ENCODE measurements at regions of chr17 and their contacts with region 1.

Region 1: DNA sequence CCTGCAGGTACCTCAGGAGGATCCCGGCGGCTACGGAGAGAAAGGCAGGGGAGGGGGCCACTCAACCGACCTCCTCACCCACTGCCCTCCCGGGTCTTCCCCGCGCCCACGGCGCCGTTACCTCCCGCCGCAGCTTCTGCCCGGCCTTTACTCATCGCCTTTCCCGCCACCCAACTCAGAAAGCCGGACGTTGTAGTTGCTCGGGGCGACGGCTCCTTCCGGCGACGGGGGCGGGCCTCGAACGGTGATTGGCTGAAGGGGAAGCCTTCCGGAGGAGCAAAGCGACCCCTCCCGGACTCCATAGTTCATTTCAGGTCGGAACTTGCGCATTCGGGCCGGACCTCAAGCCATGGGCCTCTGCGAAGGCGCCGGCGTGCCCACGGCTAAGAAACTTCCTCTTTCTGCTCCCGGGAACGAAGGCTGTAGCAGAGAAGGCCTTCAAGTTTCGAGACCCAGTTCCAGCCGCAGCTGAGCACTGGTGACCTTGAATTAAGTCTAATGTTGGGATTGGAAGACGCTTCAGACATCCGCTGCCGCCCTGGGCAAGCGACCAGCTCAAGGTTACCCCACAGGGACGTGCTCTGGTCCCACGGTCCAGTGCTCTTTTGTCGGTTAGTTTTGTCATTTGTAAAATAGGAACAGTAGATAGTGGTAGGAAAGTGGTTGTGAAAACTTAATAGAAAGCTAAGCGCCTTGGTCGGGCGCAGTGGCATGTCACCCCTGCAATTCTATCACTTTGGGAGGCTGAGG is at the start of gene PSMC3IP:
- DNase-seq: peak; percentile 98
- H3K4me3 Mint-ChIP-seq: peak within 1 kb of the TSS; percentile 98
- H3K27ac Mint-ChIP-seq: peak within 1 kb of the TSS; percentile 96
- H3K4me1 Mint-ChIP-seq: peaks cover 44% of the 10 kb centered on the region
- H3K27me3 Mint-ChIP-seq: no peaks in the 10 kb centered on the region
- total RNA-seq, gene PSMC3IP: 38.6 to 42.2 TPM

Region 2: GRCh38 chr17:42566883-42567573 is 10.7 kb before region 1 on chr17 and contains the start of gene MLX:
- CTCF ChIA-PET with region 1: interaction called, 13 read pairs
- intact Hi-C with region 1: loop called (anchors 1 kb)
- DNase-seq: peak; percentile 90
- H3K4me3 Mint-ChIP-seq: peak within 1 kb of the TSS; percentile 93
- H3K27ac Mint-ChIP-seq: peak within 1 kb of the TSS; percentile 93
- H3K4me1 Mint-ChIP-seq: peaks cover 55% of the 10 kb centered on the region
- H3K27me3 Mint-ChIP-seq: no peaks in the 10 kb centered on the region
- total RNA-seq, gene MLX: 22.1 to 24.7 TPM

Region 3: DNA sequence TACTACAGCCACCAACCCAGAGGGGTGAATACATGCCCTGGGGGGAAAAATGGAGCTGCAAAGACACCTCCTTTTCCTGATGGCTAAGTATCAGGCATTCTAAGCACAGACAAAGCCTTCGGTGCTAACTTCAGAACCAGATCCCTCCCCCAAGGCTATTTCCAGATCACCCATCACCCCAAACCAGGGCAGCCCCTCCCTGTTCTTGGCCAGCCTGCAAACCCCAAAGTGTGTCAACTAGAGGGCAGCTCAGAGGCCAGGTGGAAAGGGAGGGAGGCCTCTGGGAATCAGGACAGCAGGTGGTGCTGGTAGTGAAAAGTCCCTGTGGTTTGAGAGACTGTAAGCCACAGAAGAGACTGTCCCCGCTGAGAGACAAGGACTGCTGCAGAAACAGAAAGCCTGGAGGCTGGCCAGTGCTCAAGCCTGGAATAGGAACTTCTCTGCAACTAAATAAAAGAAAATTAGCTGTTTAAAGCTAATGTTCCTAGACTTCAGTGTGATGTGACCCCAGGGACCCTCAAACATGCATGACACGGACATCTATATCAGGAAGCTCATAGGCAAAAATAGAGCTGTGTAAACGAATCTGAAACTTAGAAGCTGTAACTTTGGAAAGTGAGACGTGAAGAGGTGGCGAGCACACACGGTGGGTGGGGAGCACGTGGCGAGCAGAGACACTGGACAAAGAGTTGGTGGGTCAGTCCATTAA is 40.9 kb after region 1 on chr17:
- CTCF ChIA-PET with region 1: interaction called, 10 read pairs
- intact Hi-C with region 1: no loop called
- DNase-seq: peak; percentile 13
- H3K4me3 Mint-ChIP-seq: no peak overlapping the region
- H3K27ac Mint-ChIP-seq: no peak overlapping the region
- H3K4me1 Mint-ChIP-seq: peaks cover 4% of the 10 kb centered on the region
- H3K27me3 Mint-ChIP-seq: no peaks in the 10 kb centered on the region

Region 4: DNA sequence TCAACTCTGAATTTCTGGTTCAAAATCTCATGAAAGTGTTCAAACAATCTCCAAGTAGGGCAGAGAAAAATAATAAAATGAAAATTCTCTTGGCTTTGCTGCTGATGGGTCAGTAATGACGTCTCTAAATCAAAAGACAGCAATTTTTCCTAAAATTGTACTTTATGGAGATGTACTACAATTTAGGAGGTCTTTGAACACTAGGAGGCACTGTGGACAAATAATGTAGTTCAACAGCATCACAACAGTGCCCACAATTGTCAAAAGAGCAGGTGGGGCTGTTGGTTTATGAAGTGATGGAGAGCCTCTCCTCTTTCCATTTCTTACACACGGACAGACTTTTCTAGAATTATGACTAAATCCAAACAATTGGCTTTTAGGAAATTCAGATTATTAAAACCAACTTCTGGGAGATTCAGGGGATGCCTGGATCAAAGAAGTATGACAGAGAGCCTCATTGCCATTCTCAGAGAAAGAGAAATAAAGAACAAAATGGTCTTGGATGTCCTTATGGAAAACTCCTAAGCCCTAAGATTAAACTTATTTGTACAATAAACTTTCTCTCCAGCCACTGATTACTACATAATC is 143.4 kb after region 1 on chr17:
- CTCF ChIA-PET with region 1: interaction called, 7 read pairs
- intact Hi-C with region 1: loop called (anchors 2 kb)
- DNase-seq: peak; percentile 35
- H3K4me3 Mint-ChIP-seq: no peak overlapping the region
- H3K27ac Mint-ChIP-seq: no peak overlapping the region
- H3K4me1 Mint-ChIP-seq: no peaks in the 10 kb centered on the region
- H3K27me3 Mint-ChIP-seq: no peaks in the 10 kb centered on the region

Region 5: DNA sequence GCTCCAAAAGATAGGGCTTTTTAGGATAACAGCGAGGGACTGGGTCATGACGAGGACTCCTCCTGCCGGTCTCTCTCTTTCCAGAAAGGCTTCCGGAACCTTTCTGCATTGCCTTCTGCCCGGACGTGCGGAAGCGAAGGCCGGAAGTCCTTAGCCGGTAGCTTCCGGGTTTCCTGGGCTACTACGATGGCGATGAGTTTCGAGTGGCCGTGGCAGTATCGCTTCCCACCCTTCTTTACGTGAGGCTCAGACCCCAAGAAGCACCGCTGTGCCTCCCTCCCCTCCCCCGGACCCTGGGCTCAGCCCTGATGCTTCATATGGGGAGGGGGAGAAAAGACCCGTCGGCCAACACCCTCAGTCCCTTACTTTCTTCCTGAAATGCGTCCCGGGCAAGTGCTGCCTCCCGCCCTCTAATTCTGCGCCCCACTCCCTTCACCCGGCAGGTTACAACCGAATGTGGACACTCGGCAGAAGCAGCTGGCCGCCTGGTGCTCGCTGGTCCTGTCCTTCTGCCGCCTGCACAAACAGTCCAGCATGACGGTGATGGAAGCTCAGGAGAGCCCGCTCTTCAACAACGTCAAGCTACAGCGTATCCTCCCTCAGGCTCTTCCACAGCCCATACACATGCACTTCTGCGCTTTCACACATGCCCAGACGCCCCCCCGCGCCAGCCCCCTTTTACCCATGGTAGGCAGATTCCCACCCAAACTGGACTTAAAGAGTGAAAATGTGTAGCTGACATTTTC is 195.8 kb after region 1 on chr17 and contains the start of gene VPS25:
- CTCF ChIA-PET with region 1: interaction called, 11 read pairs
- intact Hi-C with region 1: no loop called
- DNase-seq: peak; percentile 84
- H3K4me3 Mint-ChIP-seq: peak within 1 kb of the TSS; percentile 99
- H3K27ac Mint-ChIP-seq: peak within 1 kb of the TSS; percentile 92
- H3K4me1 Mint-ChIP-seq: peaks cover 25% of the 10 kb centered on the region
- H3K27me3 Mint-ChIP-seq: no peaks in the 10 kb centered on the region
- total RNA-seq, gene VPS25: 57.5 to 58.2 TPM

Measured in activated naive CD4-positive, alpha-beta T cell treated with anti-CD3 and anti-CD28 coated beads for 36 hours (primary cell).